ENCODE measurements at regions of chr19 and their contacts with region 1.

Region 1: GRCh38 chr19:4375164-4376027 is 25.0 kb downstream of the SH3GL1 start:
- DNase-seq: no peak
- H3K4me3 ChIP-seq: no peak overlapping the region
- H3K27ac ChIP-seq: peak overlapping the region; percentile 90
- H3K27me3 ChIP-seq: no peaks in the 10 kb centered on the region
- CTCF ChIP-seq: peak; percentile 62

Region 2: GRCh38 chr19:4278419-4279266 is 96.8 kb before region 1 on chr19 and contains the start of gene SHD:
- CTCF ChIA-PET with region 1: no interaction called
- POLR2A ChIA-PET with region 1: interaction called, 15 read pairs
- DNase-seq: no peak
- H3K4me3 ChIP-seq: 0 out of 2 replicates have a peak within 1 kb of the TSS, but pooled peaks have one; percentile 13
- H3K27ac ChIP-seq: no peak within 1 kb of the TSS
- H3K27me3 ChIP-seq: peaks cover 31% of the 10 kb centered on the region
- CTCF ChIP-seq: no peak
- polyA plus RNA-seq, gene SHD: not detected in 2 replicates

Region 3: DNA sequence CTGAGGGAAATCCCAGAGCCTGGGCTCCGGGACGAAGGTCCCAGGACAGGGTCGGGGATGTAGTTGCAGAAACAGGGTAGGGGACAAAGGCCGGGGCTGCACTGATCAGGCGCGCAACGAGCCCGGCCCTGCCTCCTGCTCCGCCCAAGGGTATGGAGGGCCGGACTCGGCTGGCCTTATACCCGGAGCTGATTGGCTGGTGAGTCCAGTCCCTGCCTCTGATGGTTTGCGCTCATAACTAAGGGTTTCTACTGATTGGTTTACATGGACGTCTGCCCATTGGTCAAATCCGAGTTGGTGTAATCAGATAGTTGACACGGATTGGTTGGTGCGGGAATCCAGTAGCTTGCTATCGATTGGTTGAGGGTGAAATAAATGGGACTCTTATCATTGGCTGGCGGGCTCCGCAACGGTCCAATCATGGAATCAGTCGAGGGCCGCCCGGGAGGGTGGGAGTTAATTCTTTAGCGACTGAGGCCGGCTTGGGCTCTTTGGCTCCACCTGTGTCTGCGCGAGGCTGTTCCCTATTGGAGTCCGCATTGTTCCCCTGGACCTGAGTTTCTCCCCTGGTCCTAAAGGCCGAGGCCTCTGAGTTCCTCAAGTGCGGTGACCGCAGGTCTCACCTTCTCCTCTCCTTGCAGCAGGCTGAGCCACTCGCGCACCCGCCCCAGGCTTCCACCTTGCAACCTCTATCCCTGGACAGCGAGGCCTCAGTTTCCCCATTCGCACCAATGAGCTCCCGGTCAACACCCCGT is 32.6 kb before region 1 on chr19:
- CTCF ChIA-PET with region 1: interaction called, 4 read pairs
- POLR2A ChIA-PET with region 1: interaction called, 12 read pairs
- DNase-seq: peak; percentile 100
- H3K4me3 ChIP-seq: peak overlapping the region; percentile 72
- H3K27ac ChIP-seq: peak overlapping the region; percentile 83
- H3K27me3 ChIP-seq: no peaks in the 10 kb centered on the region
- CTCF ChIP-seq: peak; percentile 43

Region 4: DNA sequence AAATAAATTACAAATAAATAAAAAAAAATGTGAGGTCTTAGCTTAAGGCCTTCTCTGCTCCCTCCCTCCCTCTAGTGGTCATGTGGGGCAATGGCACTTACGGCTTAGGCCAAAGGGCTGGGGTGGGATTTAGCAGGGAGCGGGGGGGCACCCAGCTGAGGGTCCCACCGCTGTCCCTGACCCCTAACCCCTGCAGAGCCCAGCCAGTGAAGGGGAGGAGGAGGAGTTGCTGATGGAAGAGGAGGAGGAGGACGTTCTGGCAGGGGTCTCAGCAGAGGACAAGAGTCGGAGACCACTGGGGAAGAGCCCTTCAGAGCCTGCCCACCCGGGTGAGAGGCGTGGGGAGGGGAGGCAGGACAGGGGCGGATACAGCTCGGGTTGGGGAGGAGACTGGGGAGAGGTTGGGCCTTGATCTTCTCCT is 22.7 kb before region 1 on chr19:
- CTCF ChIA-PET with region 1: interaction called, 15 read pairs
- POLR2A ChIA-PET with region 1: no interaction called
- DNase-seq: no peak
- H3K4me3 ChIP-seq: no peak overlapping the region
- H3K27ac ChIP-seq: no peak overlapping the region
- H3K27me3 ChIP-seq: no peaks in the 10 kb centered on the region
- CTCF ChIP-seq: peak; percentile 80

Region 5: DNA sequence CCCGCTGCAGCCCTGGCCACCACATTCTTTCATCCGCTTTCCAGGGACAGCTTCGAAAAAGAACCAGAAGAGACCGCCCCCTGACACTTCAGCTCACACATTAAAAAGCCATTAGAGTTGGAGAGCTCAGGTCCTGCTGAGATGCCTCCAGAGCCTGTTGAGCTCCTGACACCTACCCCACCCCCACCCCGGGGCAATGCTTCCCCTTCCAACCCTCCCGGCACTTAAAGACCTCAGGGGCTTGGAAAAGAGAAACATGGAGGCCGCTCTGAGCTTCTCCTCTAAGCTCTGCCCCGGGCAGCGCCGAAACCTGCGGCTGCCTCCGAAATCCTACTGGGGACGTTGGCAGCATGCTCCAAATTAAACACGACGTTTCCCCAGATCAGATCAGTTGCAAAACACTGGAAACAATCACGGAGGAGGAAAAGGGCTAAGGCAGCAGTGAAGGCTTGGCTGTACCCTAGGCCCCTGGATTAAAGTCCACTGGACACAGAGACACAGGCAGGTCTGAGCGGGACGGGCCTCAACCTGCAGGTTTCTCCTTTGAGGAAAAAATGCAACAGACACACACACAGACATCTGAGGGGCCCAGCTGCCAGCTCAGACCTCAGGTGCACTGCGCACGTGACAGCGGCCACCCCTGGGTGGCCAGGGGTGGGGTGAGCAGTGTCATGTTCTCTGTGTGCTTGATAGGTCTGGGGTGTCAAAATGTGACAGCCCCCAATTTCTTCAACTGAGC is 15.3 kb after region 1 on chr19:
- CTCF ChIA-PET with region 1: interaction called, 10 read pairs
- POLR2A ChIA-PET with region 1: interaction called, 6 read pairs
- DNase-seq: no peak
- H3K4me3 ChIP-seq: peak overlapping the region; percentile 25
- H3K27ac ChIP-seq: peak overlapping the region; percentile 75
- H3K27me3 ChIP-seq: no peaks in the 10 kb centered on the region
- CTCF ChIP-seq: no peak

Region 6: DNA sequence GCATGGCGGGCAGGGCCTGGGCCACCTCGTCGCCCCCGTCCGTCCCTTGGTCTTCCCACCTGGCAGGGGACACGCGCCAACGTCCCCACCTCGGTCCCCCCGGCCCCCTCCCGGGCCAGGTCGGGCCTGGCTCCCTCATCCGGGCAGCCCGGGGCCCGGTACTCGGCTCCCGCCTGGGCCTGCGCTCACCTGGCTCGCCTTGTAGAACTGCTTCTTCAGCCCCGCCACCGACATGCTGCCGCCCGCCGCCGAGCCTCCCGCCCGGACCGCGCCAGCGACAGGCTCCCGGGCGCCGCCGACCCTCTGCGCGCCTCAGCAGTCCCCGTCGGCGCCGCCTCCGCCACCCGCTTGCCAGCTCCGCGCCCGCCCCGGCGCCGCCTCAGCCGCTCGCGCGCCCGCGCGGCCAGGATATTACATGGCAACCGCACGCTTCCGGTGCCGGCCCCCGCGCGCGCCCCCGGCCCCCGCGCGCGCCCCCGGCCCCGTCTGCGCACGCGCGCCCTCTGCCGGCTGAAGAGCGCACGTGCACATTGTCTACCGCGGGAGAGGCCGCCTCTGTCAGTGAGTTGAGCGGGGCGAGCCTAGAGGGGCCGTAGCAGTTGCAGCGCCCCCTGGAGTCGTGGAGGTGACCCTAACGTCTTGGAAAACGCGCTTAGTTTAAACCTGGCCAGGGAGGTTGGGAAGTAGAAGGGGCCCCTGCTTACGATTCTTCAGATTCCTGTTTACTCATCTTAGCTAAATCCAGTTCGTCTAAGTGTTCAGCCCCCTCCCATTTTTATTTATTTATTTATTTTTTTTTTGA is 24.9 kb after region 1 on chr19 and contains the start of gene SH3GL1:
- CTCF ChIA-PET with region 1: interaction called, 17 read pairs
- POLR2A ChIA-PET with region 1: interaction called, 9 read pairs
- DNase-seq: peak; percentile 81
- H3K4me3 ChIP-seq: peak within 1 kb of the TSS; percentile 90
- H3K27ac ChIP-seq: peak within 1 kb of the TSS; percentile 61
- H3K27me3 ChIP-seq: no peaks in the 10 kb centered on the region
- CTCF ChIP-seq: peak; percentile 93
- polyA plus RNA-seq, gene SH3GL1: 40.2 and 57.9 TPM in 2 replicates